ENCODE measurements at regions of chr20 and their contacts with region 1.

Region 1: GRCh38 chr20:44747166-44748004 is 1.7 kb downstream of the KCNK15 start:
- DNase-seq: no peak

Region 2: DNA sequence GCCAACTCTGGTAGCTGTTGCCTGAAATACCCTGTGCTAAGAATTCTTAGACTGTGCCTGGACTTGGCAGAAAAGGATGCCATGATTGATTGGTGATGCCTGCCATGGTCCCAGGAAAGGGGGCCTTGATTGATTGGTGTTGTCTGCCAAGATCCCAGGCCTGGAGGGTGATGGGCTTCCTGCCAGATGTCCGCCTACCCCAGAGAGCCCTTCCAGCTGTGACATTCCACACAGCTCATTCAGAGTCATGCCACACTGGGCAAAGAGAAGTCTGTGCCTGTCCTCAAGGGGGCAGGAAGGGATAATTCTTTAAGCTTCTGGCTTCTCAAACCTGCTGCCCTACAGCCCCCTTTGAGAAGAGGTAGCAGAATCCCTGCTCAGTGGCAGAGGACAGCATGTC is 38.4 kb after region 1 on chr20:
- intact Hi-C with region 1: no loop called
- DNase-seq: no peak

Region 3: GRCh38 chr20:44805979-44806620 is 58.7 kb after region 1 on chr20:
- intact Hi-C with region 1: loop called (anchors 5 kb)
- DNase-seq: no peak

Region 4: GRCh38 chr20:44866703-44867335 is 119.4 kb after region 1 on chr20:
- intact Hi-C with region 1: loop called (anchors 2 kb)
- DNase-seq: no peak

Region 5: GRCh38 chr20:44924570-44924969 is 177.2 kb after region 1 on chr20:
- intact Hi-C with region 1: no loop called
- DNase-seq: no peak